ENCODE measurements at regions of chr2 and their contacts with region 1.

Region 1: GRCh38 chr2:32553829-32554432 is 73.9 kb upstream of the TTC27 start:
- DNase-seq: no peak
- ATAC-seq: peak; percentile 85
- H3K4me3 Mint-ChIP-seq: no peak overlapping the region
- H3K27ac Mint-ChIP-seq: peak overlapping the region; percentile 30
- H3K4me1 Mint-ChIP-seq: peaks cover 6% of the 10 kb centered on the region
- H3K27me3 Mint-ChIP-seq: no peaks in the 10 kb centered on the region
- CTCF ChIP-seq: no peak

Region 2: DNA sequence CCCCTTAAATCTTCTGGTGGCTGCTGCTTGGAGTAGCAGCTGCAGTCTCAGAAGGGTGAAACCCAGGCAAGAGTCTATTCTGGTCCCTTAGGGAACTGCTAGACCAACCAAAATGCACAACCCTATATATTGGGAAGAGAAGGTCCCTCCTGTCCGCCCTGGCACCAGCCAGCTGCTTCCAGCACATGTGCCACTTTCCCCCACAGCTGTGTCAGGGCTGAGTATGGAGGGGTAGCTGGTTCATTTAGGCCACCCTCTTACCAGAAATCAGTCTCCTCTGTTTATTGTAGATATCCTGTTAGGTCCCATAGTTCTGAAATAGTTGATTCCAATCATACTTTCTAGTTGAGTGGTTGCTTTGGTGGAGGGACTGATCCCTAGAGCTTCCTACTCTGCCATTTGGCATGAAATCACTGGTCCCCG is 128.2 kb before region 1 on chr2:
- CTCF ChIA-PET with region 1: no interaction called
- POLR2A ChIA-PET with region 1: no interaction called
- intact Hi-C with region 1: no loop called
- DNase-seq: no peak
- ATAC-seq: no peak
- H3K4me3 Mint-ChIP-seq: no peak overlapping the region
- H3K27ac Mint-ChIP-seq: peak overlapping the region; percentile 37
- H3K4me1 Mint-ChIP-seq: peaks cover 45% of the 10 kb centered on the region
- H3K27me3 Mint-ChIP-seq: no peaks in the 10 kb centered on the region
- CTCF ChIP-seq: no peak

Region 3: GRCh38 chr2:33395655-33396249 is 841.8 kb after region 1 on chr2:
- CTCF ChIA-PET with region 1: no interaction called
- POLR2A ChIA-PET with region 1: no interaction called
- intact Hi-C with region 1: loop called (anchors 2 kb)
- DNase-seq: no peak
- ATAC-seq: no peak
- H3K4me3 Mint-ChIP-seq: no peak overlapping the region
- H3K27ac Mint-ChIP-seq: no peak overlapping the region
- H3K4me1 Mint-ChIP-seq: no peaks in the 10 kb centered on the region
- H3K27me3 Mint-ChIP-seq: no peaks in the 10 kb centered on the region
- CTCF ChIP-seq: no peak

Region 4: GRCh38 chr2:34096562-34097171 is 1542.7 kb after region 1 on chr2:
- CTCF ChIA-PET with region 1: no interaction called
- POLR2A ChIA-PET with region 1: no interaction called
- intact Hi-C with region 1: loop called (anchors 10 kb)
- DNase-seq: no peak
- ATAC-seq: no peak
- H3K4me3 Mint-ChIP-seq: no peak overlapping the region
- H3K27ac Mint-ChIP-seq: no peak overlapping the region
- H3K4me1 Mint-ChIP-seq: no peaks in the 10 kb centered on the region
- H3K27me3 Mint-ChIP-seq: no peaks in the 10 kb centered on the region
- CTCF ChIP-seq: peak; percentile 80